ENCODE measurements at regions of chr11 and their contacts with region 1.

Region 1: DNA sequence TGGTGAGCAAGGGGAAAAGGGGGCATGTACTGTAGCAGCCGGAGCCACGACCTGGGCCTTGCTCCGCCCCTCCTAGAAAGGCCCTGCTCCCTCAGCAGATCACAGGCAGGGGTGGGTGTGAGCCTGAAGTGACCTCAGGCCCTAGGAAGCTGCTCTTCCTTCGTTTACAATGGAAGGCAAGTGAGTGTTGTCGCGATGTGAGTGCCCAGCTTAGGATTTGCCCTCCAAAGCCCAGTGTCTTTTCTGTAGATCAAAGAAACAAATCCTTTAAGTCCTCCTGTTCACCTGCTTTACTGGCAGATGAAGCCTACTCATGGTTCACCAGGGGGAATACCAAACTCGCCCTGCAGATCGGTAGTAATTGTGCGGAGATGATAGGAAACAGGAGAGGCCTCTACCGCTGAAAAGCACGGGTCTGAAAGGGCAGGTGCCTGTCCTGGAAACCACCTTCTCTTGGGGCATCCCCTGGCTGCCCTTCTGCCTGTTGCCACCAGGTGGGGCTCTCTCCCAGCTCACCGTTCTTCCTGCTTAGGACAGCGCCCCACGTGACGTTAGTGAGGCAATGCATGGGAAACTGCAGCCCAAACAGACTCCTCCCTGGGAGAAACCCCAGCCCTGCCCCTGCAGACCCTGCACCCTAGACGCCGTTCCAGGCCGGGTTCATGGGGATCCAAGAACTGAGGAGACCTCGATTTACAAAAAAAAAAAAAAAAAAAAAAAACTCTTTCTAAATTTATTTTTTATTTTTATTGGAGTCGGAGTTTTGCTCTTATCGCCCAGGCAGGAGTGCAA is 45.9 kb upstream of the RAB1B start:
- DNase-seq: peak; percentile 82 to 95
- ATAC-seq: peak; percentile 84 to 93
- H3K4me3 ChIP-seq: no peak overlapping the region
- H3K27ac ChIP-seq: peak overlapping the region; percentile 18 to 47; a peak in 4 of 6 replicates
- H3K4me1 ChIP-seq: peaks cover 14% of the 10 kb centered on the region; the same call in 1 of the 3 replicates
- CTCF ChIP-seq: peak; percentile 99
- EP300 ChIP-seq: no peak
- POLR2A ChIP-seq: no peak
- RAD21 ChIP-seq: peak; percentile 75 to 88

Region 2: GRCh38 chr11:65637794-65638317 is 584.7 kb before region 1 on chr11 and contains the start of gene SIPA1:
- CTCF ChIA-PET with region 1: no interaction called
- POLR2A ChIA-PET with region 1: no interaction called
- DNase-seq: peak; percentile 58 to 91
- ATAC-seq: peak; percentile 60 to 86
- H3K4me3 ChIP-seq: peak within 1 kb of the TSS; percentile 72
- H3K27ac ChIP-seq: peak within 1 kb of the TSS; percentile 73 to 89
- H3K4me1 ChIP-seq: peaks cover 19% of the 10 kb centered on the region
- CTCF ChIP-seq: no peak
- EP300 ChIP-seq: no peak
- POLR2A ChIP-seq: peak; percentile 42
- RAD21 ChIP-seq: no peak; a peak in 2 of 5 replicates
- polyA plus RNA-seq, gene SIPA1: 9.9 and 10.4 TPM in 2 replicates

Region 3: GRCh38 chr11:65884686-65885092 is 337.9 kb before region 1 on chr11:
- CTCF ChIA-PET with region 1: no interaction called
- POLR2A ChIA-PET with region 1: no interaction called
- DNase-seq: peak; percentile 83 to 93
- ATAC-seq: peak; percentile 16 to 49; a peak in 5 of 6 replicates
- H3K4me3 ChIP-seq: no peak overlapping the region
- H3K27ac ChIP-seq: no peak overlapping the region
- H3K4me1 ChIP-seq: peaks cover 24% of the 10 kb centered on the region
- CTCF ChIP-seq: peak; percentile 97
- EP300 ChIP-seq: no peak
- POLR2A ChIP-seq: no peak
- RAD21 ChIP-seq: peak; percentile 81 to 84

Region 4: DNA sequence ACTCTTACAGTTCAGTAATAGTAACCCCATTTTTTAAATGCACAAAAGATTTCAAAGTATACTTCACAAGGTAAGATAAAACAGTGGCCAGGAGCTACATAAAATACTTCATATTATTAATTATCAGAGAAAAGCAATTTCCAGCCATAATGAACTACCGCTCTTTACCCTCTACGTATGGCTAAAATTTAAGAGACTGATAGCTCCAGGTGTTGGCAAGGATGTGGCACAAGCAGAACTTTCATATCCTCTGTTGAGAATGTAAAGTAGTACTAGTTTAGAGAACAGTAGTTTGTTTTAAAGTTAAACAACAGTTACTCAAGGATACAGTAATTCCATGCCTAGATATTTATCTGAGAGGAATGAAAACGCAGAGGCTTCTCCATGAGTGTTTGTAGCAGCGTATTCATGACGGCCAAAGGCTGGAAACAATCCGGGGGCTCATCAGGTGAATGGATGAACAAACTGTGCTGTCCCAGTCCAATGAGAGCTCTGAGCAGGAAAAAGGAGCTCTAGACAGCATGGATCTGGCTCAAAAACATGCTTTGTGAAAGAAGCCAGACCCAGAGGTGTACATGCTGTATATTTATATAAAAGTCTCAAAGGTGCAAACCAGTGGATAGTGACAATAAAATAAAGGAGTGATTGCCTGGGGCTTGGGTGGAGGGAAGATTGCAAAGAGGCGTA is 67.0 kb before region 1 on chr11:
- CTCF ChIA-PET with region 1: interaction called, 14 read pairs
- POLR2A ChIA-PET with region 1: no interaction called
- DNase-seq: no peak
- ATAC-seq: no peak
- H3K4me3 ChIP-seq: no peak overlapping the region
- H3K27ac ChIP-seq: no peak overlapping the region
- H3K4me1 ChIP-seq: peaks cover 21% of the 10 kb centered on the region
- CTCF ChIP-seq: no peak
- EP300 ChIP-seq: no peak
- POLR2A ChIP-seq: no peak
- RAD21 ChIP-seq: no peak

Region 5: DNA sequence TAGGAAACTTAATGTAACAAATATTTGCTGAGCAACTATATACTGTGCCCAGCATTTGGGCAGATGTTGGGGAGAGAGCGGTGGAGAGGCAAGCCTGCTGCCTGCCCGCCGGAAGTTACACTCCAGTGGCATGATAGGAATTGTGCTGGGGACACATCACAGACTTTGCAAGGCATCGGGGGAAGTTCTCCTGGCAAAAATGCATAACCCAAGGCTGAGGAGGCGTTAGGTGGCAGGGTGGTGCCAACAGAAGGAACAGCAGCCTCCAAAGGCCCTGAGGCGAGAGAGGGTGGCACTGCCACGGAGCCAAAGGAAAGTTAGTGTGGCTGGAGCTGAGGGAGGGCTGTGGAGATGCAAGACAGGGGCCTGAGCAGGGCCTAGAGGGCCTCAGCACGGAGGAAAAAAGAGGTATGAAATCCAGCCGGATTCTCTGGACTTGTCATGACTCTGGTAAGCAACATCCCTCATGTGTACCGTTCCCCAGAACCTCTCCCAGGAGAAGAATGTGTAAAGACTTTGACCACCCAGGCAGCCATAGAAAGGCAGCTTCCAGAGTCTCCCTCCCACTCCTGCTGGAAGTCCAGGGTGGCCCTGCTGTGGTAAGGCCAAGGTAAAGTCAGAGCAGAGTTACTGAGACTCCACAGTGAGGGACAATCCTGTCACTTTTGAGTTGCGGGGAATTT is 30.2 kb before region 1 on chr11:
- CTCF ChIA-PET with region 1: interaction called, 23 read pairs
- POLR2A ChIA-PET with region 1: no interaction called
- DNase-seq: no peak
- ATAC-seq: peak in 1 of 2 experiments; percentile 33; a peak in 3 of 6 replicates
- H3K4me3 ChIP-seq: no peak overlapping the region
- H3K27ac ChIP-seq: peak overlapping the region in 1 of 2 experiments; percentile 64; a peak in 4 of 6 replicates
- H3K4me1 ChIP-seq: peaks cover 56% of the 10 kb centered on the region
- CTCF ChIP-seq: no peak
- EP300 ChIP-seq: no peak
- POLR2A ChIP-seq: no peak
- RAD21 ChIP-seq: no peak

Region 6: DNA sequence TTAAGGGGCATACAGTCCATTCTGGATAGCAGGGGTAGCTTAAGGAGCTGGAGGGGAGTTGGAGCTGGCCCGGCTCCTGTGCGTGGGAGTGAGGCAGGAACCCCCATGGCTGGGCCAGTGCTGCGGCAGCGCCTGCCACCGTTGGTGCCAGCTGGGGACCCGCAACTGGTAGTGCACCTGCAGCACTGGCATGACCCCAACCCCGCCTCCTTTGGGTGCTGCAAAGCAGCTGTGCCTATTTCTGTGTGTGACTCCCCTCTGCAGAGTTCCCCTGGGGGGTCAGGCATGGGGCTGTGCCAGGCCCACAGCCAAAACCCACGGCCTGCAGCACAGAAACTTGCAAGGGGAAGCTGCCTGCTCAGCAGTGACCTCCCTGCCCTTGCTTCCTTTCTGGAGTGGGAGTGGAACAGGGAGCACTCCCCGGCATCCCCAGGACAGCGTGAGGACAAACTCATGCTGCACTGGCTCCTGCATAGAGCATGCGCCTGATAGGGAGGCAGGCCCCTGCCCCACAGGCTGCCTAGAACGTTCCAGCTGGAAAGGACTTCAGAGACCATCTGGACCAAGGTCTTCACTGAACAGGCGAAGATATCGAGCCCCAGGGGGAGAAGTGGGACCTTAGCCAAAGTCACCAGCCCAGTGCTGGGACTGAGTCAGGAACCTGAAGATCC is 19.7 kb after region 1 on chr11:
- CTCF ChIA-PET with region 1: interaction called, 72 read pairs
- POLR2A ChIA-PET with region 1: no interaction called
- DNase-seq: no peak
- ATAC-seq: no peak
- H3K4me3 ChIP-seq: no peak overlapping the region
- H3K27ac ChIP-seq: no peak overlapping the region
- H3K4me1 ChIP-seq: no peaks in the 10 kb centered on the region
- CTCF ChIP-seq: no peak
- EP300 ChIP-seq: no peak
- POLR2A ChIP-seq: no peak
- RAD21 ChIP-seq: no peak

Region 7: GRCh38 chr11:66268283-66268951 is 45.9 kb after region 1 on chr11 and contains the start of gene RAB1B:
- CTCF ChIA-PET with region 1: interaction called, 20 read pairs
- POLR2A ChIA-PET with region 1: no interaction called
- DNase-seq: peak; percentile 94 to 99
- ATAC-seq: peak; percentile 67 to 88
- H3K4me3 ChIP-seq: peak within 1 kb of the TSS; percentile 93
- H3K27ac ChIP-seq: peak within 1 kb of the TSS; percentile 91 to 97
- H3K4me1 ChIP-seq: peaks cover 19% of the 10 kb centered on the region
- CTCF ChIP-seq: no peak
- EP300 ChIP-seq: no peak
- POLR2A ChIP-seq: peak; percentile 9; the same call in 1 of the 2 replicates
- RAD21 ChIP-seq: no peak
- polyA plus RNA-seq, gene RAB1B: 87.8 and 104 TPM in 2 replicates

Region 8: DNA sequence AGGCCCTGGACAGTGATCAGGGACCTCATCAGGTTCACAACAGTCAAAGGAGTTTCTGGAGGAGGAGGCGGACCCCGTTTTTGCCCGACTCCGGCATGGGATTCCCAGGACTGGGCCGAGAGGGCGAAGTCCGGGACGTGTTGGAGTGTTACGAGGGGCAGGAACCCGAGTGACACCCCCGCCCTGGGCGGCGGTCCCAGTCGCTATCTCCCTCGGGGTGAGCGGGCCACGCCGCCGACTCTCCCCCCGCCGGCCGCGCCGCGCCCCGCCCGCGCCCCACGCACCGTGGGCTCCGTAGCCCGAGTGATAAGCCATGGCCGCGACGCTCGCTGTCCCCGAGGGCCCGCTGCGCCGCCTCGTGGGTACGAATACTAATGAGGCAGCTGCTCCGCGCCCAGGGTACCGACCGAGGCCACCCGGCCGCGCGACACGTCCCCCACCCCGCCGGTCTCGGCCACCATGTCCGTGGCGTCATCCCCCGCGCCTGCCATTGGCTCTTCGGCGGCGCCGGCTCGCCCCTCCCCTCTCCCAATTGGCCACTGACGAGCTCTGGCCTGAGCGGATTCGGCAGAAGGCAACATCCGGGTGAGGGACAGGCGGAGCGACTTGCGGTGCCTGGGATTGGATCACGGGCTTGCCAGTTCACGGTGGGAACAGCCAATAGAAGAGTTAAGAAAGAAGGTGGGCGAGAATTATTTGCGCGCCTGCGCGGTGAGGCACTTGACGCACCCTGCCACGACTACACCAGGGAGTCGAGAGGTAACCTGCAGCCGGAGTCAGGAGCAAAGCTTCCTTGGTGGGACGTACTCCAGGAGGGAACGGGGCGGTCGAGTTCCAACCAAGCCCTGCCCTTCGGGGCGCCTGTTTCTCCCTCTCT is 66.4 kb after region 1 on chr11 and contains the start of gene YIF1A:
- CTCF ChIA-PET with region 1: interaction called, 17 read pairs
- POLR2A ChIA-PET with region 1: no interaction called
- DNase-seq: peak; percentile 99 to 100
- ATAC-seq: peak; percentile 78 to 94
- H3K4me3 ChIP-seq: peak within 1 kb of the TSS; percentile 86
- H3K27ac ChIP-seq: peak within 1 kb of the TSS; percentile 94 to 96
- H3K4me1 ChIP-seq: peaks cover 20% of the 10 kb centered on the region
- CTCF ChIP-seq: no peak
- EP300 ChIP-seq: no peak
- POLR2A ChIP-seq: peak; percentile 92
- RAD21 ChIP-seq: no peak
- polyA plus RNA-seq, gene YIF1A: 99.7 and 132 TPM in 2 replicates